ENCODE measurements at regions of chr5 and their contacts with region 1.

Region 1: DNA sequence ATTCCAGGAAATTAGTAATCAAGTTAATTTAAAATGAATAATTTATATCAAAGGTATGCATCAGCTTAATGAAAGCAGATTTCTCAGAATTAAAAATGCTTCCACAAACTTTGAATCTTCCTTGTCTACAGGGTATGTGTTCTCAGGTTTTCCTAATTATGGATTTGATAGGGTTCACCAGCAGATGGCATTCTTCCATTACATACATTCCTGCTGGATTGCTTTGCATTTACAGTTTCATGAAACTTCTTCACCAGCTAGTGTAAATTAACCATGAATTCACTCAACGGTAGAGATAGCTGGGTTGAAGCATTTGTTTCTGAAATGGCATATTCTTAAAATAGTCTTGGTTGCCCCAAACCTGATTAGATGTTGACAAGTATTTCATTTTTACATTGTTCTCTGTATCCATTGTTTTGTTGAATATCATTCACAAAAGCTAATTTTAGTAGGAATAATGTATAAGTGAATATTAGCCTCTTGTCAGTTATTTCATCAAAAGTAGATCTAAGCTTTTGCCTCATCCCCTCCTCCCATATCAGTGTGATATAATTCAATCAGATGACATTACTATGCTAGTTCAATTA is 68.7 kb upstream of the WDR41 start:
- DNase-seq: peak; percentile 13 to 60
- ATAC-seq: peak; percentile 59 to 66; a peak in 4 of 6 replicates
- H3K4me3 ChIP-seq: no peak overlapping the region
- H3K27ac ChIP-seq: no peak overlapping the region
- H3K4me1 ChIP-seq: no peaks in the 10 kb centered on the region
- CTCF ChIP-seq: peak; percentile 84
- EP300 ChIP-seq: no peak
- POLR2A ChIP-seq: no peak
- RAD21 ChIP-seq: peak; percentile 83 to 84

Region 2: GRCh38 chr5:77101298-77101697 is 459.5 kb before region 1 on chr5:
- CTCF ChIA-PET with region 1: no interaction called
- POLR2A ChIA-PET with region 1: no interaction called
- DNase-seq: no peak
- ATAC-seq: peak; percentile 50 to 62; a peak in 3 of 6 replicates
- H3K4me3 ChIP-seq: no peak overlapping the region
- H3K27ac ChIP-seq: no peak overlapping the region
- H3K4me1 ChIP-seq: peaks cover 6% of the 10 kb centered on the region; the same call in 1 of the 3 replicates
- CTCF ChIP-seq: no peak
- EP300 ChIP-seq: no peak
- POLR2A ChIP-seq: no peak
- RAD21 ChIP-seq: no peak

Region 3: DNA sequence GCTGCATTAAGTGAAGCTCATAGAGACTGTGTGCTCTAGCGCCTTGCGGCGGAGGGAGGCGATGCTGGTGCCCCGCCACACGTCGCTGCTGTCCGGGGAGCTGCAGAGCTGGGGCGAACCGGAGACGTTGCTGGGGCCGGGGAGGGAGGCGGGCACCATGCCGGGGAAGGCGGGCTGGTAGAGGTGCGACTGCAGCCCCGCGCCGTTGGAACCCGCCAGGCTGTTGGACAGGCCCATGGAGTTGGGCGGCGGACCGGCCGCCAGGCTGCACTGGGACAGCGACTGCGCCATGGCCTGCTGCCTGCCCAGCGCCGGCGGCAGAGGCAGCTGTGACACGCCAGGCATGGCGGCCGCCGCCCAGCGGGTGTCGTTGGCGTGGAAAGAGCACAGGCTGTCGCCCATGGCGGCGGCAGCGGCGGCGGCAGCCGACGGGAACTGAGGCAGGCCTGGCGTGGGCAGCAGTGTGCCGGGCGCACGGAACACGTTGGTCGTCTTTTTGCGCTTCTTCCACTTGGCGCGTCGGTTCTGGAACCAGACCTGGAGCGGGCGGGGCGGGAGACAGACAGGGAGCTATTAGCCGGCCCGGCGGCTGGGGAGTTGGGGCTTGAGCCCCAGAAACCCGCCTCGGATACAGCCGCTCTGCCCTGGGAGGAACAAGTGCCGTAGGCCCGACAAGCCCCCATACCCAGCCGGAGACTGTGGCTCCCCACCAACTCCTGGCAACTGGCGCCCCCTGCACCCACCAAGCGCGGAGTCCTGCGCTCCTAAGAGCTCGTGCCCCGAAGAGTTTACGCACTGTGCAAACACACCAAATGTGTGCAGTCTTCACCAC is 69.7 kb after region 1 on chr5:
- CTCF ChIA-PET with region 1: interaction called, 11 read pairs
- POLR2A ChIA-PET with region 1: no interaction called
- DNase-seq: peak; percentile 83 to 85
- ATAC-seq: peak; percentile 96 to 97
- H3K4me3 ChIP-seq: peak overlapping the region; percentile 72
- H3K27ac ChIP-seq: peak overlapping the region; percentile 76 to 91
- H3K4me1 ChIP-seq: peaks cover 6% of the 10 kb centered on the region; the same call in 2 of the 3 replicates
- CTCF ChIP-seq: no peak; the same call in 2 of the 3 replicates
- EP300 ChIP-seq: no peak
- POLR2A ChIP-seq: peak; percentile 93
- RAD21 ChIP-seq: peak in 1 of 2 experiments; percentile 27; a peak in 1 of 5 replicates

Measured in A549 (cell line).